AG04450 (cell line): ENCODE measurements at regions of chr5 and their contacts with region 1.

Region 1: GRCh38 chr5:77076961-77077823 is 9.9 kb downstream of the ZBED3 start:
- DNase-seq: peak; percentile 11
- H3K4me3 ChIP-seq: peak overlapping the region; percentile 47
- H3K27ac ChIP-seq: no peak overlapping the region
- H3K27me3 ChIP-seq: no peaks in the 10 kb centered on the region
- CTCF ChIP-seq: peak; percentile 46

Region 2: DNA sequence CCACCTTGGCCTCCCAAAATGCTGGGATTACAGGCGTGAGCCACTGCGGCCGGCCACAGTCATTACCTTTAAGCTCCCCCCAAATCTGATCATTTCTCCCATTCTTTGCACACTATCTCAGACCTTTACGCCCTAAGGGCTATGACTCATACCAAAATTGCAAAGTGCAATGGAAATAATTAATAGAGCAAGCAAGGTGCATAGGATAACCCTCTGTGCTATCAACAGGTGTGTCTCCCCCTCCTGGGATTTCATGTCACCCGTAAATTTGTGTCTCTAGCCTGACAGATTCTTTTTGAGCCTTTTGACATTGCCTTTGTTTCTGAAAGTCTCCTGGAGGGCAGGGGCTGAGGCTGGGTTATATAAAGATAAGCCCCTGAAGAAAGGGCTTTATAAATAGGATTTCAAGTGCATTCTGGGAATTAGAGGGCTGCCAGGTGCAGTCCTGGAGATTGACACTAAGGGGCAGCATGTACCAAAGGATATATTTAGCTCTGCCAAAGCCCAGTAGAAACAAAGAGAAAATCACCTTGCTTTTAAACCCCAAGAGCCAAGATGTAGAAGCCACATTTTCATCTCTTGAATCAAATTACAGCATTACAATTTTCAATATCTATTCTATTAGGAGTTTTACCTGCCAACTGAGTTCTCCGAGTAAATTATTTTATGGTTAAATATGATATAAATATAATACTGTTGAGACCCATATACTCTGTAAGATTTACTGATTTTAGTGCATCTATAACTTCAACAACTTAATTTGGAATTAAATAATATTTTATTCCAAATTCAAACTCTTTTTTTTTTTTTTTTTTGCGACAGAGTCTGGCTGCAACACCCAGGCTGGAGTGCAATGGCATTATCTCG is 209.1 kb before region 1 on chr5:
- CTCF ChIA-PET with region 1: interaction called, 13 read pairs
- POLR2A ChIA-PET with region 1: no interaction called
- DNase-seq: peak; percentile 47
- H3K4me3 ChIP-seq: no peak overlapping the region
- H3K27ac ChIP-seq: no peak overlapping the region
- H3K27me3 ChIP-seq: no peaks in the 10 kb centered on the region
- CTCF ChIP-seq: peak; percentile 87

Region 3: DNA sequence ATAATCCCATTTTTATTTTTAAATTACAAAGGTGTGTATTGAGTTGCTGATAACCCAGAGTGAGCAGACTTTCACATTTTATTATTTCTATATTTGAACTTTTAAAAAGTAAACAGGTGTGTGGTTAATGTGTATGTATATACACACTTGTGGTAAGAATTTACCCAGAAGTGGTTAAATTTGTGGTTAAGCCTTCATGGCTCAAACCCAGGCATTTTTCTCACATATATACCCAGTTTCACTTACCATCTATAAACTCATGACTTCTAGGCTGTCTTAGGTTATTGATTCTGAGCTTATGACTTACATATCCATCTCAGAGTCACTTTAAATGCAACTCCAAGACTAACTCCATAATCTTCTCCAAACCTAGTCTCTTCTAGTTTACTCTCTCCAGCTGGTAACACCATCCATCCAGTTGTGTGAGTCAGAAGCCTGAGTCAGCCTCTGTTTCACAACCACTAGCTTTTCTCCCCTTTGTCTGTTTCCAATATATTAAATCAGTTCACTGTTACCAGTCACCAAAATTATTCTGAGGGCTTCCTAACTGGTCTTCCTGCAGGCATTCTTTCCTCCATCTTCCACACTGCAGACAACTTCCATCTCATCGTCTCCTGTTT is 10.3 kb before region 1 on chr5:
- CTCF ChIA-PET with region 1: interaction called, 26 read pairs
- POLR2A ChIA-PET with region 1: interaction called, 3 read pairs
- DNase-seq: peak; percentile 62
- H3K4me3 ChIP-seq: no peak overlapping the region
- H3K27ac ChIP-seq: peak overlapping the region; percentile 89
- H3K27me3 ChIP-seq: no peaks in the 10 kb centered on the region
- CTCF ChIP-seq: no peak

Region 4: DNA sequence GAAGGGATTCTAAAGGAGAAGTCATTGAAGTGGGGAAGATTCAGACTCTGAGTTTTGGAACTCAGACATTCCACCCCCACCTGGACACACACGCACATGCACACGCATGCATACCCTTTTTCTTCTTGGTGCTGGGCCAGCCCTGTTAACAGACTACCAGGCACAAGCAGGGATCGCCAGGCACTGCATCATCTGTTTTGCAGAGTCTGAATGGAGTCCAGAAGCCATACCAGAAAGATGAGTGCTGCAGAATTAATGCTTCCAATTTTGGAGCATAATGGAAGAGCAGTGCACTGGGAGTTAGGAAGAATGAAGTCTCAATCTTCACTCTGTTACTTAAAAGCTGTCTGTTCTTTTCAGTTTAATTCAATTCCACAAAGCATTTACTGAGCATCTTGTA is 228.8 kb after region 1 on chr5:
- CTCF ChIA-PET with region 1: no interaction called
- POLR2A ChIA-PET with region 1: no interaction called
- DNase-seq: no peak
- H3K4me3 ChIP-seq: no peak overlapping the region
- H3K27ac ChIP-seq: no peak overlapping the region
- H3K27me3 ChIP-seq: no peaks in the 10 kb centered on the region
- CTCF ChIP-seq: no peak

Region 5: DNA sequence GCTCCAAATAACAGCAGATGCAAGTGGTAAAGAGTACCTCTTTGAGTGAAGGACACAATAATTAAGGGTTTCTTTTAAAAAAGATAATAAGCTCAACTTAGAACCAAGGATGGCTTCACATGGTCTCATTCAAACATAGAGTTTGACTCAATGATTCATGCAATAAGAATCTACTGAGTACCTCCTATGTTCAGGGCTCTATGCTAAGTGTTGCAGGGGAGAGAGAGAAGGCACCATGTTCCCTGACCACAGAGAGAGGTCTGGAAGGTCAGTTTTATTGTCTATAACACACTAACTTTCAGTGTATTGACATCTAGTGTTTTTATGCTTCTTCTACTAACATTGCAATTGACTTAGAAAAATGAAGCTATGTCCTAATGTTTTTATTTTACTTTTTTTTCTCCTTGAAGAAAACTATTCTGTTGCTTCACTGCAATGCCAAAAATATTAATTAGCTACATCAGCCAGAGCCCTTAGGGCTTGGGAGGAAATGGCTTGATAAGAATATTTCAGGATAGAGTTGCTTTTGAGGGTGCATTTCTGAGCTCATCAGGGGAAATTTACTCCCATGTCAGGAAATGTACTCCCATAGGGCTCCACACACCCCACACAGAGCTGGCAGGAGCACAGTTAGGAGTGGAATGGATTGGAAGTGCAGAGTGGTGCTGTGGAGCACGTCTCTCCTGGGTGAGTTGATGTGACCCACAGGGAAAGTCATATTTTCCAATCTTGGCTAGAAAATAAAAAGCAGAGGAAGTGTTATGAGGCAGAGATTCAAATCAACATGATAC is 239.9 kb after region 1 on chr5:
- CTCF ChIA-PET with region 1: no interaction called
- POLR2A ChIA-PET with region 1: no interaction called
- DNase-seq: no peak
- H3K4me3 ChIP-seq: no peak overlapping the region
- H3K27ac ChIP-seq: no peak overlapping the region
- H3K27me3 ChIP-seq: no peaks in the 10 kb centered on the region
- CTCF ChIP-seq: no peak